Transverse colon (tissue), 4 donors: ENCODE measurements at regions of chr18 and their contacts with region 1.

Region 1: GRCh38 chr18:51668101-51668500 is 470.6 kb upstream of the MEX3C start:
- DNase-seq: peak; percentile 47
- H3K4me3 ChIP-seq: no peak overlapping the region
- H3K27ac ChIP-seq: no peak overlapping the region
- H3K4me1 ChIP-seq: no peaks in the 10 kb centered on the region
- H3K27me3 ChIP-seq: no peaks in the 10 kb centered on the region
- CTCF ChIP-seq: peak; percentile 61 to 72 (median 69)
- EP300 ChIP-seq: no peak
- POLR2A ChIP-seq: no peak

Region 2: DNA sequence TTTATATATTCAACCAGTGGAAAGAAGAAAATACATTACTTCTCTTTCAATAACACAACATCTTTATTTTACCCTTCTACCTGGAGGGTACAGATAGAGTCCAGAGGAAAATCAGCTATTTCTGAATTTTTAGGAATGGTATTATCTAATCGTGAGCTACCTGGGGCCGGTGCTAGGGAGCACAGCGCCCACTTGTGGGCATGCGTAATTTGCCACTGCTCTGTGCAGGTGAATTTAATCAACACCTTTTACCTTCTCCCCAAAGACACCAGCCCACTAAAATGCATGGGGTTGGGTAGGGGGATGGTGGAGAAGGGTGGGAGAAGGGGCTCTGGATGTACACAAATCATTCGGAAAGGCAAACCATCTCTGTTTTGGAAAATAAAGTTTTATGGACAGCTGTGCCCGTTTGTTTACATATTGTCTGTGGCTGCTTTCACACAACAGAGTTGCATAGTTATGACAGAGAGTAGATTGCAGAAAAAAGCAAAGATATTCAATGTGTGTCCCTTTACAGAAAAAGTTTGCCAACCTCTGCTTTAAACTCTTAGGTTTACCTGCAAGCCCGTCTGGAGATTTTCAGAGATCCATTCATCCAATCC is 620.4 kb after region 1 on chr18:
- in situ Hi-C with region 1: loop called in 3 of 4 experiments (anchors 10 to 25 kb)
- intact Hi-C with region 1: no loop called
- DNase-seq: peak; percentile 13
- H3K4me3 ChIP-seq: no peak overlapping the region
- H3K27ac ChIP-seq: no peak overlapping the region
- H3K4me1 ChIP-seq: no peaks in the 10 kb centered on the region
- H3K27me3 ChIP-seq: no peaks in the 10 kb centered on the region
- CTCF ChIP-seq: peak; percentile 32 to 58 (median 52)
- EP300 ChIP-seq: no peak
- POLR2A ChIP-seq: no peak